Right ventricle myocardium inferior (tissue), 1 donor: ENCODE measurements at regions of chr5 and their contacts with region 1.

Region 1: DNA sequence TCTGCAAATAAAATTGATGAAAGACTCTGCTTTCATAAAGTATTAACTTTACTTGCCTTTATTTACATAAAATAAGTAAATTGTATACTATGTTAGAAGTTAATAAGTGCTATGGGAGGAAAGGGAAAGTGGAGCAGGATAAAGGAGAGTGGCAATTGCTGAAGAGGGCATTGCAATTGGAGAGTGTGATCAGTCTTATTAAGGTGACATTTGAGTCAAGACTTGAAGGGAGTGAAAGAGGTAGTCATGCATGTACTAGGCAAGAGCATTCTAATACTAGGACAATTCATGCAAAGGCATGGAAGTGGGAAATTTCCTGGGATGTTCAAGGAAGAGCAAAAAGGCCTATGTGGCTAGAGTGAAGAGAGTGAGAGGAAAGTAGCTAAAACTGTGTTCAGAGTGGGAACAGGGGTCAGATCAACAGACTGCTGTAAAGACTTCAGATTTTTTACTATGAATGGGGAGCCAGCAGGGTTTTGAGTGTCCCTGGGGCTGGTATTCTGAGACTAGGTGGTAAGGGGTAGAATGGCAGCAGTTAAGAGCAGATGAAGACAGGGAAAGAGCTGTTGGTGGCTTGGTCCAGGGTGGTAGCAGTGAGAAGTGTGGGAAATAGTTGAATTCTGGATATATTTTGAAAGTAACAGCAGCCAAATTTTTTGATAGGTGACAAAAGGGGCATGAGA is 182.3 kb upstream of the RIOK2 start:
- DNase-seq: no peak
- ATAC-seq: no peak

Region 2: DNA sequence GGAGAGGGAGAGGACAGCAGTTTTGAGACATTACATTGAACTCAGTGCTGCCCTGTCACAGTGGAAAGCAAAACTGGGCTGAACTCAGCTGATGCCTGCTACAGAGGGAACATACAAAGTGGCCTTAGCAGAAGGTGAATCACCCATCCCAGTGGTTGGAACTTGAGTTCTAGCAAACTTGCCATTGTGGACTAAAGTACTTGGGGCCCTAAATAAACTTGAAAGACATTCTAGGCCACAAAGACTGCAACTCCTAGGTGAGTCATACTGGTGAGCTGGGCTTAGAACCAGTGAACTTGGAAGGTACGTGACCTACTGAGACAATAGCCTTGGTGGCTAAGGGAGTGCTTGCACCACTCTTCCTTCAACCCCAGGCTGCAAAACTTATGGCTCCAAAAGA is 26.6 kb before region 1 on chr5:
- intact Hi-C with region 1: loop called (anchors 2 kb)
- DNase-seq: no peak
- ATAC-seq: no peak